ENCODE measurements at regions of chr7 and their contacts with region 1.

Region 1: DNA sequence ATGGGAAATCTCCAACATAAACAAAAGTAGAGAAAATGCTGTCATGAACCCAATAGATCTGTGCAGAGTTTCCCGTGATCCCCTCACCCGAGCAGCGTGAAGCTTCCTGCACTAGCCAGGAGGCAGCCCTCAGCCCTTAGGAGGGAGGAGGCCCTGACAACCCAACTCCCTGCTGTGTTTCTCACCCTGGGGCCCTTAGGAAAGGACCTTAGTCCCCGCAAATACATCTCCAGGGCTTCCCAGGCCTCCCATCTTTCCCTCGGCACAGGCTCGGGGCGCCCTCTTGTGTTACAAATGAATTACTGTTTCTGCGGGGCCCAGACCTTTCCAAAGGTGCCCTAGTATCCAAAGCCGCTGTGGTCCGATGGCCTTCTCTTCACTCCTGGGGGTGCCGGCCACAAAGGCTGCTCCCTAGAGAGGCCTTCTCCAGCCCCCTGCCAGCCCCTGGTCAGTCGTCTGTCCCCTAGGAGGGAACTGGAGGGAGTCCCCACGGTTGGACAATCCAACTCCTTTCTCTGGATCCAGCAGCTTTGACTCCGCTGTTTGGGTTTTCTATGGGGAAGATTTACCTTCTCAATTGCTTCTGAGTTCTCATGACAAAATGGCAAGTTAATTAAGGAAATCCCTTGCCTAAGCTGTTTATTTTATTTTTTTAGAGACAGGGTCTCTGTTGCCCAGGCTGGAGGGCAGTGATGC is 49.9 kb upstream of the SH2B2 start:
- DNase-seq: peak; percentile 57
- H3K4me3 ChIP-seq: no peak overlapping the region
- H3K27ac ChIP-seq: no peak overlapping the region
- H3K4me1 ChIP-seq: no peaks in the 10 kb centered on the region
- H3K27me3 ChIP-seq: no peaks in the 10 kb centered on the region
- CTCF ChIP-seq: peak; percentile 69 to 79
- POLR2A ChIP-seq: no peak

Region 2: DNA sequence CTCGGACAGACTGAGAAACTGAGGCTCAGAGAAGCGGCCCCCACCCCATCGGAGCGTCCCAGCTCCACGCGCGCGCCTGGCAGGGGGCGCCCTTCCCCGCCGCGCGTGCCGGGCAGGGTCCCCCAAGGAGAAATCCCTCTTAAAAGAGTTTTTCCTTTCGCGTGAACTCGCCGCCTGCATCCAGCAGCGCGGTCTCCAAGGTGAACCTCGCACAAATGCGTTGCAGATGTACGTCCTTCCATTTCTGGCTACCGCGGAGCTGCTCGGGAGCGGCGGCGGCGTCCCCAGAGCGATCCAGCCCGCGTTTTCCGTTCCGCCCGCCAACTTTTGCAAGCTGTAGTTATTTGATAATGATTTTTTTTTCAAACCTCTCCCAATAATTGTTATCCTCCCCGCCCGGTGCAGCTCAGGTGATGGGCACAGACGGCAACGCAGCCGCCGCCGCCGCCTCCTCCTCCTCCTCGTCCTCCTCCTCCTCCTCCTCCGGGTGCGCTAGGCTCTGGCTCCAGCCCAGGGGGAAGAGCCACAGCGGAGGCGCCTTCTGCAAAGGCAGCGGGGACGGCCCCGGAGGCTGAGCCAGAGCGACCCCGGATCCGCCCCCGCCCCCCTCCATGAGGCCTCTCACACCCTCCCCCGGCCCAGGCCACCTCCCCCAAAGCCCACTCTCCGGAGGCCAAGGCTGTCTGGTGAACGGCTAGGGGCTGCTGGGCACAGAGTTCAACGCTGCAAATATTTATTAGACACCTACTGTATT is 493.3 kb before region 1 on chr7:
- CTCF ChIA-PET with region 1: interaction called, 5 read pairs
- POLR2A ChIA-PET with region 1: no interaction called
- dilution Hi-C with region 1: no loop called
- intact Hi-C with region 1: loop called (anchors 2 kb)
- DNase-seq: peak; percentile 59
- H3K4me3 ChIP-seq: peak overlapping the region in 2 of 3 experiments; percentile 15 to 35
- H3K27ac ChIP-seq: no peak overlapping the region
- H3K4me1 ChIP-seq: no peaks in the 10 kb centered on the region
- H3K27me3 ChIP-seq: peaks cover 2 to 5% of the 10 kb centered on the region in 2 experiments
- CTCF ChIP-seq: peak; percentile 43 to 49
- POLR2A ChIP-seq: no peak

Measured in endothelial cell of umbilical vein (primary cell).